ENCODE measurements at regions of chr9 and their contacts with region 1.

Region 1: DNA sequence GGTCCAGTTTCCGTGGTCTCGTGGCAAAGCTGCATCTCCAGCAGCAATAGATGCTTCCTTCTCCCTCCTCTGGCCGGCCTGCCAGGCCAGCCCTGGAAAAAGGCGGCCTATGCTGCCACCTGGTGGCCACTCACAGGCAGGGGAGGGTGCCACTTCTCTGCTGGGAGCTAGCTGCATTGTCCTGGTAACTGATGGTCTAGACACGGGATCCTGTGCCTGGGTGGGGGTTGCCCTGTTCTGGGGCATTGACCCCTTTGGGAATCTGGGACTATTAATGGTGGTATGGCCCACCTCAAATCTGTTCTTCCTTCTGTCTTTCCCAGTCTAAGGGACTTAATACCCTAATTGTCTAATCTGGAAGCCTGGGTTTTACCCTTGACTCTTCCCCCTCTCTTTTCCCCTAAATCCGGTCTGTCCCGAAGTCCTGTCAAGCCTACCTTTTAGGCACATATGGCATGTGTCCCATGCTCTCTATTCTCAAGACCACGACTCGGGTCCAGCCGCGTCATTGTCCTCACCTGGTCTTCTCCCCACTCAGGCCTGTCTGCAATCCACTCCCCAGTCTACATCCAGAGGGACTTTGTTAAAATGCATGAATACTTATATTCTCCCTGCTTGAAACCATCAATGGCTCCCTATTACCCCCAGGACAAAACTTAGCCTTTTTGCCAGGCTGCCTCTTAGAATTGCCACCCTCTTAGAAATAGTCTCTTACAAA is 20.0 kb upstream of the PTGS1 start:
- DNase-seq: peak; percentile 94
- H3K4me3 Mint-ChIP-seq: no peak overlapping the region
- H3K27ac Mint-ChIP-seq: no peak overlapping the region
- H3K4me1 Mint-ChIP-seq: peaks cover 22% of the 10 kb centered on the region
- H3K27me3 Mint-ChIP-seq: peaks cover 38% of the 10 kb centered on the region

Region 2: DNA sequence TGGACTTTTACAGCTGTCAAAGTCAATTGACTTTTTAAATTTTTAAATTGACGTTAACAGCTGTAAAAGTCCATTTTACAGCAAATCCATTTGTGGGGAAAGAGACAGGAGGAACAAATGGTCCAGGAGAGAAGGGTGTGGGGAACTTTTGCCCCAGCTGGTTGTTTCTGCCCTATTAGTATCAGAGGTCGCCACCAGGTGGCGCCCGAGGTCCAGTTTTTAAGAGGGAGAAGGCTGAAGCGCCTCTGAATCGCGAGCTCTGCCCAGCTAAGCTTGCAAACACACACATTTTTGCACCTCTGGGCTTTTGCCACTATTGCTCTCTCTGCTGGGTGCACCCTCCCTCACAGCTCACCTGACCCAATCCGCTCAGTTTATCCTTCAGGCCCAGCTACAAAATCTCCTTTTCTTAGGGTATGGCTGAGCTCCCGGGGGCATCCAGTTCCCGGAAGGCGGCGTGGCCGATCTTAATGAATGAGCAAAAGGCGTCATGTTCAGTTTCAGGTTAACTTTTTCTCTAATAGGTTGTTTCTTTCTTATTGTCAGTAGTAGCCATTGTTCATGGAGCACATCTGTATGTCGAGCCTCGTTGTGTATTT is 251.4 kb before region 1 on chr9:
- intact Hi-C with region 1: loop called (anchors 1 kb)
- DNase-seq: peak; percentile 93
- H3K4me3 Mint-ChIP-seq: peak overlapping the region; percentile 24
- H3K27ac Mint-ChIP-seq: no peak overlapping the region
- H3K4me1 Mint-ChIP-seq: peaks cover 16% of the 10 kb centered on the region
- H3K27me3 Mint-ChIP-seq: peaks cover 28% of the 10 kb centered on the region

Region 3: GRCh38 chr9:122213589-122214413 is 137.0 kb before region 1 on chr9:
- intact Hi-C with region 1: loop called (anchors 10 kb)
- DNase-seq: peak; percentile 91
- H3K4me3 Mint-ChIP-seq: peak overlapping the region; percentile 60
- H3K27ac Mint-ChIP-seq: no peak overlapping the region
- H3K4me1 Mint-ChIP-seq: peaks cover 14% of the 10 kb centered on the region
- H3K27me3 Mint-ChIP-seq: peaks cover 68% of the 10 kb centered on the region

Region 4: DNA sequence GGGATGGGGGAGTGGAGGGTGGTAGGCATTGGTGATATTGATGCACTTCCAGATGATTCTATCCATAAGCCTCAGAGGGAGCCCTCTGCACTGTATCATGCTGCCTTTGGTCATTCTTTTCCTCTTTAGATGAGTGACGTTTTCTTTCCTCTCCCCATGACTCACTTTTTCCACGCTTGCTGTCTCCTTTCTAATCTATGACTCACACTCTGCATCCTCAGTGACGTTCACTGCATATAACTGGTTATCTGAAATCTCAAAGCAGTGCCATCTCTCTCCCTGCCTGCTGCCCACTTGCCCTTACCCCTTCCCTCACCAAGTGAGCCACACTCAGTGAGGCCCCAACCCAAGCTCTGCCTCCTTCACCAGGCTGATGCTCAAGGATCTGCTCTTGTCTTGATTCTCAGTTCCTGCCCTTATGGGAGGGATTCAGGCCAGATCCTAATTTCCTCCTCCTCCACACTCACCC is 51.6 kb after region 1 on chr9:
- intact Hi-C with region 1: no loop called
- DNase-seq: peak; percentile 82
- H3K4me3 Mint-ChIP-seq: peak overlapping the region; percentile 3
- H3K27ac Mint-ChIP-seq: peak overlapping the region; percentile 91
- H3K4me1 Mint-ChIP-seq: peaks cover 23% of the 10 kb centered on the region
- H3K27me3 Mint-ChIP-seq: peaks cover 2% of the 10 kb centered on the region

Region 5: DNA sequence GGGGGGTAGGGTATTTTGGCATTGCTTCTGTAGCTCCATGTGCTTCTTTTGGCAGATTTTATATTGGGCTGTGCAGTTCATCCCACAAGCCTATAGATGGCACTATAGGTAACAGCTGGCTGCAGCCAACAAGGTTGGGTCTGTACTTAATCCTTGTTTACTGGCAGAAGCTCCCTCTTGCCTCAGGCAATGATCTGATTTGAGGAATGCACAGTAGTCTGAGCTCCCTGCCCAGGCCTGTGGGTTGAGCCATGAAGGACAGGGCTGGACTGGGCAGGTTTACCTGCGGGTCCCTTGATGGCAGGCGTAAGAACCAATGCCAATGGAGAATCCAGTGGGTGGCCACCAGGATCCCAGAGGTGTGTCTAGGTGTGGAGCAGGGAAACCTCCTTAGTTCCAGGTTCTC is 148.1 kb after region 1 on chr9:
- intact Hi-C with region 1: no loop called
- DNase-seq: peak; percentile 75
- H3K4me3 Mint-ChIP-seq: no peak overlapping the region
- H3K27ac Mint-ChIP-seq: no peak overlapping the region
- H3K4me1 Mint-ChIP-seq: no peaks in the 10 kb centered on the region
- H3K27me3 Mint-ChIP-seq: peaks cover 19% of the 10 kb centered on the region